Activated T-helper 2 cell treated with anti-CD3 and anti-CD28 coated beads, Interferon-gamma antibody, Interleukin-2, Interleukin-4, amounts not matched to agents 10 μg/mL and 5 μg/mL and 100 μg/mL, durations not matched to agents 14 hours and 24 hours and 36 hours (primary cell): ENCODE measurements at regions of chr1 and their contacts with region 1.

Region 1: GRCh38 chr1:108199781-108200570 is at the start of gene SLC25A24:
- DNase-seq: peak; percentile 84
- H3K4me3 Mint-ChIP-seq: peak within 1 kb of the TSS; percentile 89
- H3K27ac Mint-ChIP-seq: peak within 1 kb of the TSS; percentile 75
- H3K4me1 Mint-ChIP-seq: peaks cover 37% of the 10 kb centered on the region
- H3K27me3 Mint-ChIP-seq: peaks cover 5% of the 10 kb centered on the region
- total RNA-seq, gene SLC25A24: 27.5 and 28.0 TPM in 2 replicates

Region 2: DNA sequence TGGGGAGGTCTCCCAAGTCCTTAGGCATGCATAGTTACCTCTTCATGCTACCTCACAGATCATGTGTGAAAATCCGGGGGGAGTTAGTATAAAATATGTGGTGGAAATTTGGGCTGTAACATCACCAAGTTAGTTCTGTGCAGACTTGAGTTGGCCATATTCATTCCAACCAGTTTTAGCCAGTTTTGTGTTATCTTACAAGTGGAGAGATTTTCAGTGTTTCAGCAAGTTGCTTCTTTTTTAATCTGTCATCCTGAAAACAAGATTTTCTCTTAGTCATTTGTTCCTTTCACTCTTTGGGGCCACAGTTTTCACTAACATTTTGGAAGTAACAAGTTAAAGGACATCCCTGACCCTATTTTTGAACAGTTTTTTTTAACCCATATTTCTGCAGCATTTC is 11.2 kb before region 1 on chr1:
- intact Hi-C with region 1: loop called (anchors 1 kb)
- DNase-seq: no peak
- H3K4me3 Mint-ChIP-seq: no peak overlapping the region
- H3K27ac Mint-ChIP-seq: no peak overlapping the region
- H3K4me1 Mint-ChIP-seq: peaks cover 11% of the 10 kb centered on the region
- H3K27me3 Mint-ChIP-seq: no peaks in the 10 kb centered on the region